OCI-LY7 (cell line): ENCODE measurements at regions of chr9 and their contacts with region 1.

Region 1: GRCh38 chr9:68577774-68578591 is 37.3 kb upstream of the TMEM252 start:
- DNase-seq: peak; percentile 82
- H3K4me3 ChIP-seq: peak overlapping the region; percentile 44
- H3K27ac ChIP-seq: peak overlapping the region; percentile 88
- H3K4me1 ChIP-seq: peaks cover 78% of the 10 kb centered on the region
- CTCF ChIP-seq: no peak

Region 2: GRCh38 chr9:68546596-68547390 is 31.2 kb before region 1 on chr9:
- CTCF ChIA-PET with region 1: no interaction called
- POLR2A ChIA-PET with region 1: interaction called, 3 read pairs
- intact Hi-C with region 1: loop called (anchors 2 kb)
- DNase-seq: peak; percentile 75
- H3K4me3 ChIP-seq: peak overlapping the region; percentile 22
- H3K27ac ChIP-seq: peak overlapping the region; percentile 41
- H3K4me1 ChIP-seq: peaks cover 28% of the 10 kb centered on the region
- CTCF ChIP-seq: no peak

Region 3: DNA sequence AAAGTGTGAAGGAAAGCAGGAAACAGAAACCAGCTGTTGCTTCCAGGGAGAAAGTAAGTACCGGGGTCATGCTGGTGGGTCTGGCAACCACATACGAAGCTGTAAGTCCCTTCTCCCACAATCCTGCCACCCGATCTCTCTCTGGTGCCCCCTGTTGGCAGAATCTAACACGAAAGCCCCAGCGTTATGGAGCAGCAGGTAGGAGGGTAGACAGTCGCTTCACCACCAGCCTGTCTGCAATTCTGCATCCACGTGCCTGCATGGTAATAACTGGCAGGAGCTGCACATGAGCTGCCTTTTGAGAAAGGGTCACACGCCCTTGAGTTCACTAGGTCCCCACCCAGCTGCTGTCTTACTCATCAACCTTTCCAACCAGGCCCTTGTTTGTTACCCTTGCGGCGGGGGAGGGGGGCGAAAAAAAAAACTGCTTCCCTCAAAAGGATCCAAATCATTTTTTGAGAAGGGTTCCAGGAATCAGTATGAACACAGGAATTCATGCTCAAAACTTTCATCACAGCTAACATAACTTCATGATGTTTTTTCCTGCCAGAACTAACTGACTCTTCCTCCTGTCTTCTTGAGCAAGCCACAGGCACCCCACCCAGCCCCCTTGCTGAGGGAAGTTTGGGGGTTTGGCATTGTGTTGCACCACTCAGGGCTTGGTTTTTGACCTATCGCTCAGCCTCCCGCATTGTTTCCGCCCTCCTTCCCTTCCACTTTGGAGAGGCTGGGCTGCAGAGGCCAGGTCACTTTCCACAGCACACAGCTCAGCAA is 17.7 kb before region 1 on chr9:
- CTCF ChIA-PET with region 1: no interaction called
- POLR2A ChIA-PET with region 1: interaction called, 13 read pairs
- intact Hi-C with region 1: no loop called
- DNase-seq: peak; percentile 54
- H3K4me3 ChIP-seq: no peak overlapping the region
- H3K27ac ChIP-seq: no peak overlapping the region
- H3K4me1 ChIP-seq: no peaks in the 10 kb centered on the region
- CTCF ChIP-seq: peak; percentile 80

Region 4: DNA sequence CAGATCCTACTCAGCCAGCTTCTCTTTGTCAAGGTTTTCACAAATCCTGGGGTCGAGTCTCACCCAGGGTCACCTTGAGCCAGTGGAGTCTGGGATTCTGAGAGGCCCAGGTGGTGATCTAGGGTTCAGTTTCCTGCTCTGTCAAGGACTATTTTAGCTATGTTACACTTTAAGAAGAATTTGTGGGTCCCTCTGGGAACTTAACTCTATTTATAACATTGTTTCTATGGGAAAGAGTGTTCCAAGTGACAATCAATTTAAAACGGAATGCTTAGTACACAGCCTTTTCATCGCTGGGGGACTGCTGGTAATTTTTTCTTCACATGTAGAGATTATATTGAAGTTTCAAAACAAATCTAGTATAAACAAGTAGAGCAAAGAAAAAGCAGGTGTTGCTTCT is 10.4 kb before region 1 on chr9:
- CTCF ChIA-PET with region 1: interaction called, 3 read pairs
- POLR2A ChIA-PET with region 1: interaction called, 14 read pairs
- intact Hi-C with region 1: no loop called
- DNase-seq: no peak
- H3K4me3 ChIP-seq: no peak overlapping the region
- H3K27ac ChIP-seq: no peak overlapping the region
- H3K4me1 ChIP-seq: no peaks in the 10 kb centered on the region
- CTCF ChIP-seq: no peak

Region 5: GRCh38 chr9:68603371-68603770 is 25.4 kb after region 1 on chr9:
- CTCF ChIA-PET with region 1: no interaction called
- POLR2A ChIA-PET with region 1: no interaction called
- intact Hi-C with region 1: no loop called
- DNase-seq: no peak
- H3K4me3 ChIP-seq: no peak overlapping the region
- H3K27ac ChIP-seq: no peak overlapping the region
- H3K4me1 ChIP-seq: no peaks in the 10 kb centered on the region
- CTCF ChIP-seq: no peak